Mammary epithelial cell (primary cell): ENCODE measurements at regions of chr3 and their contacts with region 1.

Region 1: GRCh38 chr3:141412087-141412935 is 44.0 kb downstream of the ZBTB38 start:
- DNase-seq: peak; percentile 58
- H3K4me3 ChIP-seq: peak overlapping the region; percentile 17 to 37 (median 26)
- H3K27ac ChIP-seq: peak overlapping the region; percentile 85
- H3K4me1 ChIP-seq: peaks cover 41% of the 10 kb centered on the region
- H3K27me3 ChIP-seq: no peaks in the 10 kb centered on the region
- CTCF ChIP-seq: no peak

Region 2: DNA sequence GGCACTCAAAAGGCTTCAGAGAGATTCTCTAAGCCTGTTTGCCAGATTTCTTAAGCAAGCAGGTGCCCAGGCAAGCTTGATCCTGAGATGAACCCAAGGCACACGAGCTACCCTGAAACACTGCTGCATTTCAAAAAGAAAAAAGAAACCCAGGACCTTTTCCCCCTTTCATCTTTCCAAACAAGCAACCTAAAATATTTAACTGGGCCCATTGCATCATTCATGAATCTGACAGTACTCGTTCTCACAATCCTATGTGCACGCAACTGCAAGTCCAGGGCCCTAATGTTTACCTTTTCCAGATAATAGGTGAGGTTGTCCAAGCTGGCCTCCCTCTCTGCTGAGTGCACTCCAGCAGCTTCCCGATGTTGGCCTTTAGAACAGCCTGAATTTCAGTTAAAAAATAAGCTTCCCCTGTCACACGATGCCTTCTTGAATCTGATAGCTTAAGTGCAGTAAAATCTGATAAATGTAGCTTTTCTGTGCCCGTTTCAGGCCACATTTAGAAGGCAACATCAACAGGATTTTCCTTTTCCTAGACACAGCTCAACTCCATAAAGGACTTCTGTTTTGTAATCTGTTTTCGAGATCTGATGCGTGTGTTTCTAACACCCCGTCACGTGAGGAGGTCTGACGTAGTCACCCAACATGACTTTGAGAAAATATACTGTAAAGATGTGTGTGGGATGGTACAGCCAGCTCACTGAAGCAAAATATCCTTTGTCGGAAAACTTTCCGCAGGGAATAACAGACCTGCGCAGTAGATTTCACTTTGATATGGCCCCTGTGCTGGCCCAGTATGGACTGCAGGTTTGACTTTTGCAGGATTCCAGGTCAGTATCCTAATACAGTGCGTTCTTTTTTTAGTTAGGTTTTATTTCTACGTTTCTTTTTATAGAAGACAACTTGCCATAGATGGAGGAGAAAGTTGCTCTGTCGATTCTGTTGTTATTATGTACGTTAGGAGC is 19.4 kb after region 1 on chr3:
- CTCF ChIA-PET with region 1: no interaction called
- dilution Hi-C with region 1: no loop called
- in situ Hi-C with region 1: no loop called
- intact Hi-C with region 1: loop called (anchors 2 kb)
- DNase-seq: no peak
- H3K4me3 ChIP-seq: no peak overlapping the region
- H3K27ac ChIP-seq: no peak overlapping the region
- H3K4me1 ChIP-seq: peaks cover 3% of the 10 kb centered on the region
- H3K27me3 ChIP-seq: no peaks in the 10 kb centered on the region
- CTCF ChIP-seq: no peak